CD14-positive monocyte (primary cell): ENCODE measurements at regions of chr3 and their contacts with region 1.

Region 1: GRCh38 chr3:101573449-101574387 is at the start of gene PCNP:
- DNase-seq: peak; percentile 97 to 99 (median 99)
- H3K4me3 ChIP-seq: peak within 1 kb of the TSS; percentile 84 to 91 (median 85)
- H3K4me3 Mint-ChIP-seq: peak within 1 kb of the TSS; percentile 95 to 99
- H3K27ac ChIP-seq: peak within 1 kb of the TSS; percentile 88 to 95
- H3K27ac Mint-ChIP-seq: peak within 1 kb of the TSS; percentile 96 to 100 (median 99)
- H3K4me1 ChIP-seq: peaks cover 14 to 25% of the 10 kb centered on the region in 2 donors
- H3K4me1 Mint-ChIP-seq: peaks cover 23% of the 10 kb centered on the region
- H3K27me3 ChIP-seq: no peaks in the 10 kb centered on the region
- H3K27me3 Mint-ChIP-seq: peaks cover 0 to 5% (median 4%) of the 10 kb centered on the region in 3 donors
- CTCF ChIP-seq: peak; percentile 97
- polyA plus RNA-seq, gene PCNP: 32.0 to 68.2 (median 57.4) TPM

Region 2: DNA sequence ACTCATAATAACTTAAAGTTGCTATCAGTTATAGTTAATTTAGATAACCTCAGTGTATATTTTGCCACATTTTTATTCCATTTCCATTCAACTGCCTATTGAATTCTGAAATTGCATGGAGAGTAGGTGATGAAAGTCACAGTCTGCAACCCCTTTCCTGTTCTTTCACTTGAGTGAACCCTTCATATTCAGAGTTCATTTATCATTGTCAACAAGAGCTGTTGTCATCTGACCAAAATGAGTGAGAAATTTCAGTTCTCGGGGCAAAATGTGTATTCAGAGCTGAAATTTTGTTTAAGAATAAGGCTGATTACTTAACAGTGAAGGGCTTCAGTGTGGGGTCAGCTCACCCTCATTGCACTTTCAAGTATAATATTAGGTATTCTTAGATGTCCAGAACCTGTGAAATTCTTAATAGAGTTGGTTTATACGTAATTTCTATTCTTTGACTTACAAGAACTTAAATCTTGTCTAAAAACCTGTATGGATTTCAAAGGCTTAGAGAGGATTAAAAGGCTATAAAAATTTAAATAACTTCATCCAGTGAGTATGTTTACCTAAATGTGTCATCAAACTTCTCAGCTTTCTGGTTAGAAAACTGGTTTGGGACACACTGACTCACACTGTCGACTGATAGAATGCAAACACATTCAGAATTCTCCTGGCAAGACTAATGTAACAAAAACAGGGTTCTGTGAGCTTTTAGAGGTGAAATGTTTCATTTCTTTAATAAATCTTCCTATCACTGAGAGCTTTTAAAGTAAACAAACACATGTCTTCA is 1663.8 kb before region 1 on chr3:
- intact Hi-C with region 1: loop called in 1 of 2 experiments (anchors 5 kb)
- DNase-seq: no peak
- H3K4me3 ChIP-seq: no peak overlapping the region
- H3K4me3 Mint-ChIP-seq: no peak overlapping the region
- H3K27ac ChIP-seq: no peak overlapping the region
- H3K27ac Mint-ChIP-seq: no peak overlapping the region
- H3K4me1 ChIP-seq: no peaks in the 10 kb centered on the region
- H3K4me1 Mint-ChIP-seq: peaks cover 6% of the 10 kb centered on the region
- H3K27me3 ChIP-seq: no peaks in the 10 kb centered on the region
- H3K27me3 Mint-ChIP-seq: peaks cover 0 to 2% (median 0%) of the 10 kb centered on the region in 3 donors
- CTCF ChIP-seq: no peak

Region 3: GRCh38 chr3:101685870-101686412 is 112.2 kb after region 1 on chr3:
- intact Hi-C with region 1: loop called (anchors 5 kb)
- DNase-seq: no peak
- H3K4me3 ChIP-seq: peak overlapping the region; percentile 86 to 98 (median 95)
- H3K4me3 Mint-ChIP-seq: peak overlapping the region; percentile 99
- H3K27ac ChIP-seq: peak overlapping the region; percentile 85 to 95
- H3K27ac Mint-ChIP-seq: peak overlapping the region; percentile 97 to 99 (median 99)
- H3K4me1 ChIP-seq: peaks cover 50 to 56% of the 10 kb centered on the region in 2 donors
- H3K4me1 Mint-ChIP-seq: peaks cover 47% of the 10 kb centered on the region
- H3K27me3 ChIP-seq: no peaks in the 10 kb centered on the region
- H3K27me3 Mint-ChIP-seq: peaks cover 0 to 2% (median 0%) of the 10 kb centered on the region in 3 donors
- CTCF ChIP-seq: no peak

Region 4: DNA sequence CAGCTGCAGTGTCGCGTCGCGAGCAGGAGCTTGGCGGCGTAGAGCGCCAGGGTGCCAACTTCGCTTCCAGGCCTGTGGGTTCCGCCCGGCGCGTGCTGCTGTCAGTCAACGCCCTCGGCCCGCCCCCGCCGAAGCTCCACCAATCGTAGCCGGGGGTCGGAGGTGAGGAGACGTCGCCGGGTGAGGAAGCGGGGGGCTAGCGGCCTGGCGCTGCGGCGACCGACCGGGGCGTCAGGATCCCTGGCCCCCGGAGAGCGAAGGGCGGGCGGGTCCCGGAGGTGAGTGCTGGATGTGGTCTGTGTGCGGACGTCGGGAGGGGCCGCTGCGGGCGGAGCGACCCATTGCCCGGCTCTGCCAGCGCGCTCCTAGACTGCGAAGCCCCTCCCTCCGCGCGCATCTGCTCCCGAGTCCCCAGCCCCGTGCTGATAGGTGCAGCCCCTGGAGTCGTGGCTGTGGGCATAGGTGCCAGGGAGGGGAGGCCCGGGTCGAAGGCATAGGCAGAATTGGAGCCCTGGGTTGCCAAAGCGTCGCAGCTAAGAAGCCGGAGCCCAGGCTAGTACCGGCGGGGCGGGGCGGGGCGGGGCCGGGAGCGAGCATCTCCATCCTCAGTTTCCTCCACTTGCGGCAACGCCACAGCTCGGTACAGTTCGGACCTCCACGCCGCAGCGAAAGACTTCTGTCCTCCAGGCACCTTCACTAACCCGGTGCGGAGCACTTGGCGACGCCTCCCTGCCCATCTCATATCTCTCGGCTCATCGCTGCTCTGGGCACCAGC is 205.5 kb after region 1 on chr3 and contains the start of gene NXPE3:
- intact Hi-C with region 1: loop called in 1 of 2 experiments (anchors 10 kb)
- DNase-seq: peak; percentile 73 to 80 (median 80)
- H3K4me3 ChIP-seq: peak within 1 kb of the TSS; percentile 78 to 94 (median 93)
- H3K4me3 Mint-ChIP-seq: peak within 1 kb of the TSS; percentile 89 to 94
- H3K27ac ChIP-seq: peak within 1 kb of the TSS; percentile 41 to 91
- H3K27ac Mint-ChIP-seq: peak within 1 kb of the TSS; percentile 83 to 93 (median 91)
- H3K4me1 ChIP-seq: peaks cover 40 to 42% of the 10 kb centered on the region in 2 donors
- H3K4me1 Mint-ChIP-seq: peaks cover 46% of the 10 kb centered on the region
- H3K27me3 ChIP-seq: no peaks in the 10 kb centered on the region
- H3K27me3 Mint-ChIP-seq: peaks cover 0 to 3% (median 0%) of the 10 kb centered on the region in 3 donors
- CTCF ChIP-seq: no peak
- polyA plus RNA-seq, gene NXPE3: 14.6 to 35.8 (median 19.8) TPM

Region 5: DNA sequence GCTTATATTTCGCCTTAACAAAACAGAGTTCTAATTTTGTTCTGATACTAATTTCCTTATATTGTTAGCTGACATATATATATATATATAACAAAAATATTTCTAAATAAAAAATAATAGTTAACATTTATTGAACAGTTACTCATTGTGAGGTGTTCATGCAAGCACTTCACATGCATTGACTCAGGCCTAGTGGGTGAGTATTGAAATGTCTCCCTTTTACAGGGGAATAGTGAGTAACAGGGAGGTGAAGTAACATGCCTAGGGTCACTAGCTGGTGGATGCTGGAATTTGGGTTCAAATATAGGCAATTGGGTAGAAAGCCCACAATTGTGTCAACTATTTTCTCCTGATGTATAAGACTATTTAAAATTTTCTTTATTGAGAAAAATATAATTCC is 758.5 kb after region 1 on chr3:
- intact Hi-C with region 1: no loop called
- DNase-seq: no peak
- H3K4me3 ChIP-seq: no peak overlapping the region
- H3K4me3 Mint-ChIP-seq: no peak overlapping the region
- H3K27ac ChIP-seq: no peak overlapping the region
- H3K27ac Mint-ChIP-seq: no peak overlapping the region
- H3K4me1 ChIP-seq: no peaks in the 10 kb centered on the region
- H3K4me1 Mint-ChIP-seq: no peaks in the 10 kb centered on the region
- H3K27me3 ChIP-seq: no peaks in the 10 kb centered on the region
- H3K27me3 Mint-ChIP-seq: peaks cover 0 to 2% (median 0%) of the 10 kb centered on the region in 3 donors
- CTCF ChIP-seq: no peak